A673 (cell line): ENCODE measurements at regions of chr17 and their contacts with region 1.

Region 1: GRCh38 chr17:18235743-18236256 is 10.4 kb downstream of the LLGL1 start:
- DNase-seq: no peak
- H3K4me3 ChIP-seq: no peak overlapping the region
- H3K27ac ChIP-seq: no peak overlapping the region
- H3K4me1 ChIP-seq: no peaks in the 10 kb centered on the region
- H3K27me3 ChIP-seq: no peaks in the 10 kb centered on the region
- CTCF ChIP-seq: no peak

Region 2: DNA sequence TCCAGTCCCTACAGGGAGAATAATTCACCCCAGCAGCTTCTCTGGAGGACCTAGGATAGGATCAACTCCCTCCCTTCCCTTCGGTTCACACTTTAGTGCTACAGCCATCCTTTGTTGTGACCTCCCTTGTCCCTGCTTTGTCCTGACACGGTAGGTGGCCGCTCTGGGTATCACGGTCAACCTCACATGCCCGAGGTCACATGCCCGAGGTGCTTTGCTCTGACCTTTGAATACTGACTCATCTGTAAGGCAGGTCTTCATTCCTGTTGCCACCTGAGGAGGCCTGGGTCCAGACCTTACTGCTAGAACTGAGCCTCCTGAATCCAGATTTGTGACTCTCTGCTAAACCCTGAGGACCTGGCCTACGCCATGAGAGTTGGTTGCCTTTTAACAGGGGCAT is 32.5 kb before region 1 on chr17:
- CTCF ChIA-PET with region 1: interaction called, 10 read pairs
- POLR2A ChIA-PET with region 1: no interaction called
- intact Hi-C with region 1: no loop called
- DNase-seq: no peak
- H3K4me3 ChIP-seq: no peak overlapping the region
- H3K27ac ChIP-seq: no peak overlapping the region
- H3K4me1 ChIP-seq: no peaks in the 10 kb centered on the region
- H3K27me3 ChIP-seq: no peaks in the 10 kb centered on the region
- CTCF ChIP-seq: no peak

Region 3: DNA sequence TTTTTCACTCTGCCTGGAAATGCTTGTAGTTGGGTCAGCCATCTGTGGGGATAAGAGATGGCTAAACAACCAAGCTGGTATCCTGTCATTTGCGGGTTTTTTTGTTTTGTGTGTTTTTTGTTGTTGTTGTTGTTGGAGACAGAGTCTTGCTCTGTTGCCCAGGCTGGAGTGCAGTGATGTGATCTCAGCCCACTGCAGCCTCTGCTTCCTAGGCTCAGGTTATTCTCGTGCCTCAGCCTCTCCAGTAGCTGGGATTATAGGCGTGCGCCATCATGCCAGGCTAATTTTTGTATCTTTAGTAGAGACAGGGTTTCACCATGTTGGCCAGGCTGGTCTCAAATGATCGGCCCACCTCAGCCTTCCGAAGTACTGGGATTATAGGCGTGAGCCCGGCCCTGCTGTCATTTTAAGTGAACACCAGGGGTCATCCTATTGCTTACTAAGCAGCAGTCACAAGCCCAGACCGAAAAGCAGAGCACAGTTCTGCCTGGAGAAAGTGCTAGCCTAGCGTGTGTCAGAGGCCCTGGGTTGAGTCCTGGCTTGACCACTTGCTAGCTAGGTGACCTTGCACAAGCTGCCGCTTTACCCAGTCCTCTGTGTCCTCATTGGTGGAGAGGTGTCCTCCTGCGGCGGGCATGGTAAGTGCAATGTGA is 83.9 kb after region 1 on chr17:
- CTCF ChIA-PET with region 1: no interaction called
- POLR2A ChIA-PET with region 1: no interaction called
- intact Hi-C with region 1: no loop called
- DNase-seq: peak; percentile 60
- H3K4me3 ChIP-seq: no peak overlapping the region
- H3K27ac ChIP-seq: no peak overlapping the region
- H3K4me1 ChIP-seq: peaks cover 16% of the 10 kb centered on the region
- H3K27me3 ChIP-seq: no peaks in the 10 kb centered on the region
- CTCF ChIP-seq: peak; percentile 56